ENCODE measurements at regions of chr3 and their contacts with region 1.

Region 1: GRCh38 chr3:157201648-157202278 is 41.8 kb upstream of the CCNL1 start:
- DNase-seq: no peak
- ATAC-seq: peak; percentile 78
- H3K4me3 Mint-ChIP-seq: no peak overlapping the region
- H3K27ac Mint-ChIP-seq: no peak overlapping the region
- H3K4me1 Mint-ChIP-seq: peaks cover 7% of the 10 kb centered on the region
- H3K27me3 Mint-ChIP-seq: no peaks in the 10 kb centered on the region
- CTCF ChIP-seq: 0 out of 2 replicates have a peak, but pooled peaks have one; percentile 22

Region 2: GRCh38 chr3:157159762-157160657 is 41.8 kb before region 1 on chr3 and contains the start of gene CCNL1:
- CTCF ChIA-PET with region 1: interaction called, 22 read pairs
- POLR2A ChIA-PET with region 1: no interaction called
- DNase-seq: peak; percentile 87
- ATAC-seq: peak; percentile 91
- H3K4me3 Mint-ChIP-seq: peak within 1 kb of the TSS; percentile 96
- H3K27ac Mint-ChIP-seq: peak within 1 kb of the TSS; percentile 98
- H3K4me1 Mint-ChIP-seq: peaks cover 44% of the 10 kb centered on the region
- H3K27me3 Mint-ChIP-seq: no peaks in the 10 kb centered on the region
- CTCF ChIP-seq: no peak
- total RNA-seq, gene CCNL1: 67.2 to 79.6 TPM (median 72.7 TPM) in 3 replicates

Region 3: DNA sequence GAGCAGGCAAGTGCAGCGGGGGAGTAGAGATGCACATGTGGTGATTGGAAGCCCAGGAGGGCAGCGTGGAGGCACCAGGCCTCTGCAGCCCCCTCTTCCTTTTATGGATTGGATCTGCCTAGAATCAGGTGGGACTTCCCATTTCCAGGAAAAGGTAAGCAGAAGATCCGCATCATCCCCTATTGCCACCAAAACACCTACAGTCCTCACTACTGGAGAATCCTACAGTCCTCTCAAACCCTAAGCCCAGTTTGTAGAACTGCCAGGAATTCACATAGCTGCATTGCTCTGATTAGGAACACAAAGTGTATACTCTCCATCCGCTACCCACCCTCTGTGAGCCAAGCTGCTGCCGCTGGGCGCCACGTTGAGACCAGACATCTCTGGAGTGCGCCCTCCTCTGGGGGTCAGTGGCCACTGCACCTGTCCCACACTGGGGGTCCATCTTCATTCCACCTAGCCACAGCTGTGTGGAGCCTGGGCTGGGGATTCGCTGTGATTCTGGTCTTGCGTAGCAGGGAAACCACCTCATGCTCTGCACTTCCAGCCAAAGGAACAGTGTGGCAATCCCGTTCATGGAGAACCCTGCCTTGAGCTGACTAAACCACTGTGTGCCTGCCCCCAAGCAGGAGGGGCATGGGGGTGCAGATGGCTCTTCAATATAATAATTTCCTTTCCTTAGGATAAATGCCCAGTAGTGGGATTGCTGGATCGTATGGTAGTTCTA is 146.0 kb after region 1 on chr3:
- CTCF ChIA-PET with region 1: interaction called, 35 read pairs
- POLR2A ChIA-PET with region 1: no interaction called
- DNase-seq: peak; percentile 89
- ATAC-seq: peak; percentile 100
- H3K4me3 Mint-ChIP-seq: no peak overlapping the region
- H3K27ac Mint-ChIP-seq: no peak overlapping the region
- H3K4me1 Mint-ChIP-seq: peaks cover 6% of the 10 kb centered on the region
- H3K27me3 Mint-ChIP-seq: no peaks in the 10 kb centered on the region
- CTCF ChIP-seq: peak; percentile 96

Region 4: DNA sequence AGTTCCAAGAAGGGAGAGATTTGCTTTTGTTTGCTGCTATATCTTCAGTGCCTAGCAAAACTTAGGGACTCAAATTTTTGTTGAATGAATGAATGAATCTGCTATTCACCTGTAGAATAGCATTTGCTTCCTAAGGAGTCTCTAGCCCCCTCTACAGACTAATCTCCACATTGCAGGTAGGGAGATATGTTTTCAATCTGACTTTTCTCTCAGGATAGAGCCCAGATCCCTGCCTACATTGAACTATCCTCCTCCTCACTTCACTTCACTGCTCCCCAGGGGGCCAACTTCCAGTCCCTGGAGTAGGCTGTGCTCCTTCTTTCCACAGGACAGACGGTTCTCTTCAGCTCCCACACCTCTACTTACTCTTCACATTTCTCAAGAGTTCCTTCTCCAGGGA is 153.0 kb after region 1 on chr3:
- CTCF ChIA-PET with region 1: interaction called, 12 read pairs
- POLR2A ChIA-PET with region 1: no interaction called
- DNase-seq: peak; percentile 37
- ATAC-seq: peak; percentile 94
- H3K4me3 Mint-ChIP-seq: no peak overlapping the region
- H3K27ac Mint-ChIP-seq: no peak overlapping the region
- H3K4me1 Mint-ChIP-seq: peaks cover 5% of the 10 kb centered on the region
- H3K27me3 Mint-ChIP-seq: no peaks in the 10 kb centered on the region
- CTCF ChIP-seq: peak; percentile 72